H1 (cell line): ENCODE measurements at regions of chr7 and their contacts with region 1.

Region 1: GRCh38 chr7:107201795-107202450 is 33.1 kb downstream of the HBP1 start:
- DNase-seq: peak; percentile 19 to 58
- H3K4me3 ChIP-seq: no peak overlapping the region
- H3K27ac ChIP-seq: no peak overlapping the region
- H3K4me1 ChIP-seq: no peaks in the 10 kb centered on the region
- H3K27me3 ChIP-seq: no peaks in the 10 kb centered on the region
- CTCF ChIP-seq: peak; percentile 67 to 76 (median 75)
- EP300 ChIP-seq: no peak
- POLR2A ChIP-seq: no peak
- RAD21 ChIP-seq: peak; percentile 81 to 82

Region 2: GRCh38 chr7:107180378-107180777 is 21.5 kb before region 1 on chr7:
- CTCF ChIA-PET with region 1: interaction called, 10 read pairs
- POLR2A ChIA-PET with region 1: no interaction called
- DNase-seq: no peak
- H3K4me3 ChIP-seq: no peak overlapping the region
- H3K27ac ChIP-seq: no peak overlapping the region
- H3K4me1 ChIP-seq: no peaks in the 10 kb centered on the region
- H3K27me3 ChIP-seq: no peaks in the 10 kb centered on the region
- CTCF ChIP-seq: no peak
- EP300 ChIP-seq: no peak
- POLR2A ChIP-seq: no peak
- RAD21 ChIP-seq: no peak

Region 3: DNA sequence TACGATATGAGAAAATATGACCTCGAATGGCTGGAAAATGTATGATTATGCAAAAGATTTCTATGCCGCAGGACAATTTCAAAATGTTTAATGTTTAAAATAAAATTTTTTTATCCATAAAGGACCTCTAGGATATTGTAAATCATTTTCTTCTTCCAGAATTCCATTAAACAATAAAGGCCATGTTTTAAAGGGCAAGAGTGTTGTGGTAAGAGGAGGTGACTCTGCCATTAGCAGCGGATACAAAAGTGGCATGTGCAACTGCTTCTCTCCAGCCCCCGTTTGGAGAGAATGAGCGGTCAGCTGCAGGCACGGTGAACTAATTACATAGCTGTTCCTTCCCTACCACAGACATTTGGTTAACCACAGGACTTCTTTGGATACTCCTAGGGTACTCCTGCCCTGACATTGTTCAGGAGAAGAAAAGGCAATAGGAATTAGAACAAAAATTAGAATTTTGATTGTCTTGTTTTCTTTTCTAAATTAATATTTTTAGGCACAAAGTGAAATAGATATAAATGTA is 30.7 kb after region 1 on chr7:
- CTCF ChIA-PET with region 1: no interaction called
- POLR2A ChIA-PET with region 1: no interaction called
- DNase-seq: no peak
- H3K4me3 ChIP-seq: no peak overlapping the region
- H3K27ac ChIP-seq: no peak overlapping the region
- H3K4me1 ChIP-seq: peaks cover 0 to 9% (median 2%) of the 10 kb centered on the region in 4 experiments; a peak in 3 of 7 replicates
- H3K27me3 ChIP-seq: no peaks in the 10 kb centered on the region
- CTCF ChIP-seq: no peak
- EP300 ChIP-seq: no peak
- POLR2A ChIP-seq: no peak
- RAD21 ChIP-seq: no peak

Region 4: DNA sequence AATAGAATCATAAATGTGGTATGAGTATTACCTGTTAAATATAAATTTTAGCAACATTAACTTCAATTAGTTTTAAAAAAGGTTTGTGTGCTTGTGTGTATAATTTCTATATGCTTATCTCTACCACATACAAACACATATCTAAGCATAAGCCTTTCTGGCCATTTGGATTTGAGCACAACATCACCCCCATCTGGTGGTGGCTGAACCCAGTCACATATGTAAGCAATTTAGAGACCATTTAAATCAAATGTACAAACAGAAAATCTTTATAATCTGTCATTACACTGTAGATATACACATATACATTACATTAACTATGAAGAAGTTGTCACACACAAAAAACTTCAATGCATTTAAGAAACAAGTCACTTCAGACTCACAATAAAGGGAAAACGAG is 299.7 kb after region 1 on chr7:
- CTCF ChIA-PET with region 1: interaction called, 17 read pairs
- POLR2A ChIA-PET with region 1: no interaction called
- DNase-seq: no peak
- H3K4me3 ChIP-seq: no peak overlapping the region
- H3K27ac ChIP-seq: no peak overlapping the region
- H3K4me1 ChIP-seq: peaks cover 0 to 3% (median 0%) of the 10 kb centered on the region in 4 experiments; a peak in 1 of 7 replicates
- H3K27me3 ChIP-seq: no peaks in the 10 kb centered on the region
- CTCF ChIP-seq: peak in 2 of 3 experiments; percentile 32 to 47; a peak in 2 of 4 replicates
- EP300 ChIP-seq: no peak
- POLR2A ChIP-seq: no peak
- RAD21 ChIP-seq: peak; percentile 65 to 67